Common myeloid progenitor, CD34-positive (primary cell): ENCODE measurements at regions of chr17 and their contacts with region 1.

Region 1: GRCh38 chr17:56891784-56892183 is 22.1 kb downstream of the TRIM25 start:
- DNase-seq: peak; percentile 31 to 63 (median 59)
- H3K4me3 ChIP-seq: no peak overlapping the region
- H3K27ac ChIP-seq: no peak overlapping the region
- H3K4me1 ChIP-seq: no peaks in the 10 kb centered on the region
- H3K27me3 ChIP-seq: no peaks in the 10 kb centered on the region

Region 2: DNA sequence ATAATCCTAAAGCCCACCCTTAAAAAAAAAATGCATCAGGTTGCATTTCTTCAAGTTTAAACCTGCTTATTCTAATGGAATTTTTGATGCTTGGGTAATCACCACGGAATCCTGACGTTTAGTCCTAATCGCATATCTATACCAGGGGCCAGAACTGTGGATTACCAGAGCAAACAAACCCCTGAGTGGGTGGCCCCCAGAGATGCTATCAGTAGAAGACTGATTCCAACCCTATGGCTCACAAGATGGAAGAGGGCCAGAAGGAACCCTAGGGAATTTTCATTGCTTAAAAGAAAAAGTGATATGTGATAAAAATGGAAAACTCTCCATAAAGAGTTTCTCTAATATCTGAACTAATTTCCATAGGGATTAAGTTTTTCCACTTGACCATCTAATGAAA is 450.5 kb before region 1 on chr17:
- CTCF ChIA-PET with region 1: no interaction called
- POLR2A ChIA-PET with region 1: no interaction called
- DNase-seq: no peak
- H3K4me3 ChIP-seq: no peak overlapping the region
- H3K27ac ChIP-seq: no peak overlapping the region
- H3K4me1 ChIP-seq: peaks cover 0 to 11% (median 5%) of the 10 kb centered on the region in 4 experiments
- H3K27me3 ChIP-seq: no peaks in the 10 kb centered on the region

Region 3: DNA sequence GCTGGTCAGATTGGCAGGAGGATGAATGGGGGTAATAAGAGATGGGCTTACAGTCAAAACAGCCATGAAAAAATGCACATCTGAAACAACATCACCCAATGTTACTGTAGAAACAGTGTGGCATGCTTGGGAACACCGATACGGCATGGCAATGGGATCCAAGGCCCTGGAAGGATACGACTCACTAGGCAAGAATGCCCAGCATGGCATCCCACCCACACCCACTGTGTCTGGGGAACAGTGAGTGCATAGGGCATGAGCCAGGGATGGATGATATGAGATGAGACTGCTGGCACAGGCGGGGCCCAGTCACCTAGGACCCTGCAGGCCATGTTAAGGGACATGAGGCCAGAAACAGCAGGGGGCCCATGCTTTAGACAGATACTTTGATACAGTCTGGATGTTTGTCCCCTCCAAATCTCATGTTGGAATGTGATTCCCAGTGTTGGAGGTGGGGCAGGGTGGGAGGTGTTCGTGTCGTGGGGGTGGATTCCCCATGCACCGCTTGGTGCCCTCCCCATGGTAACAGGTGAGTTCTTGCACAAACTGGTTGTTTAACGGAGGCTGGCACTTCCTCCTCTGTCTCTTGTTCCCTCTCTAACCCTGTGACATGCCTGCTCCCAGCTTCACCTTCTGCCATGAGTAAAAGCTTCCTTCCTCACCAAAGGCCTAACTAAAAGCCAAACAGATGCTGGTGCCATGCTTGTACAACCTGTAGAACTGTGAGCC is 10.7 kb after region 1 on chr17:
- CTCF ChIA-PET with region 1: interaction called, 24 read pairs
- POLR2A ChIA-PET with region 1: no interaction called
- DNase-seq: no peak
- H3K4me3 ChIP-seq: no peak overlapping the region
- H3K27ac ChIP-seq: no peak overlapping the region
- H3K4me1 ChIP-seq: peaks cover 0 to 3% (median 0%) of the 10 kb centered on the region in 4 experiments
- H3K27me3 ChIP-seq: no peaks in the 10 kb centered on the region

Region 4: GRCh38 chr17:56973524-56973923 is 81.7 kb after region 1 on chr17:
- CTCF ChIA-PET with region 1: no interaction called
- POLR2A ChIA-PET with region 1: no interaction called
- DNase-seq: no peak
- H3K4me3 ChIP-seq: no peak overlapping the region
- H3K27ac ChIP-seq: no peak overlapping the region
- H3K4me1 ChIP-seq: peaks cover 12 to 18% (median 15%) of the 10 kb centered on the region in 4 experiments
- H3K27me3 ChIP-seq: peaks cover 0 to 5% (median 0%) of the 10 kb centered on the region in 5 experiments